ENCODE measurements at regions of chr19 and their contacts with region 1.

Region 1: DNA sequence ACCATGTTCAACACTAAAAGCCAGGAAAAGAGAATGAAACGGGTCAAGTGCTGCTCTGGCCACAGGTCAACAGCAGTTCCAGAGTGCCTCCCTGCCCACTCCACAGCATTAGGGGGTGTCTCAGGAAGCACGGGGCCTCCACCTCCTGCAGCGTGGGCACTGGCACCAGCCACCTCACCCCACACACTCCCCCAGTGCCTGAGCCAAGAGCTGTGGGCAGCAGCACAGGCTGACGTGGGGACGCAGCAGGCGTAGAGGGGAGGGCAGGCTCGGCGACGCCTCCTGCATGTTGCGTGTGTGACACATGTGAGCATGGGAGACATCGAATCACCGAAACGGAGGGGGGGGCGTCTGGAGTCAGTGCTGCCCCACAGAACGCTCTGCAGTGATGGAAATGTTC is 21.4 kb upstream of the TMEM160 start:
- DNase-seq: no peak
- ATAC-seq: no peak
- H3K4me3 ChIP-seq: no peak overlapping the region
- H3K27ac ChIP-seq: no peak overlapping the region
- H3K4me1 ChIP-seq: peaks cover 0 to 4% (median 0%) of the 10 kb centered on the region in 9 donors
- H3K27me3 ChIP-seq: no peaks in the 10 kb centered on the region
- CTCF ChIP-seq: no peak

Region 2: GRCh38 chr19:47095476-47096099 is 25.8 kb after region 1 on chr19:
- intact Hi-C with region 1: loop called in 1 of 10 experiments (anchors 1 kb)
- DNase-seq: no peak
- ATAC-seq: peak in 1 of 8 donors; percentile 27
- H3K4me3 ChIP-seq: no peak overlapping the region
- H3K27ac ChIP-seq: peak overlapping the region in 9 of 10 donors; percentile 29 to 86 (median 67)
- H3K4me1 ChIP-seq: peaks cover 16 to 60% (median 51%) of the 10 kb centered on the region in 9 donors
- H3K27me3 ChIP-seq: no peaks in the 10 kb centered on the region
- CTCF ChIP-seq: no peak

Measured in heart right ventricle (tissue), 16 donors.